ENCODE measurements at regions of chr3 and their contacts with region 1.

Region 1: DNA sequence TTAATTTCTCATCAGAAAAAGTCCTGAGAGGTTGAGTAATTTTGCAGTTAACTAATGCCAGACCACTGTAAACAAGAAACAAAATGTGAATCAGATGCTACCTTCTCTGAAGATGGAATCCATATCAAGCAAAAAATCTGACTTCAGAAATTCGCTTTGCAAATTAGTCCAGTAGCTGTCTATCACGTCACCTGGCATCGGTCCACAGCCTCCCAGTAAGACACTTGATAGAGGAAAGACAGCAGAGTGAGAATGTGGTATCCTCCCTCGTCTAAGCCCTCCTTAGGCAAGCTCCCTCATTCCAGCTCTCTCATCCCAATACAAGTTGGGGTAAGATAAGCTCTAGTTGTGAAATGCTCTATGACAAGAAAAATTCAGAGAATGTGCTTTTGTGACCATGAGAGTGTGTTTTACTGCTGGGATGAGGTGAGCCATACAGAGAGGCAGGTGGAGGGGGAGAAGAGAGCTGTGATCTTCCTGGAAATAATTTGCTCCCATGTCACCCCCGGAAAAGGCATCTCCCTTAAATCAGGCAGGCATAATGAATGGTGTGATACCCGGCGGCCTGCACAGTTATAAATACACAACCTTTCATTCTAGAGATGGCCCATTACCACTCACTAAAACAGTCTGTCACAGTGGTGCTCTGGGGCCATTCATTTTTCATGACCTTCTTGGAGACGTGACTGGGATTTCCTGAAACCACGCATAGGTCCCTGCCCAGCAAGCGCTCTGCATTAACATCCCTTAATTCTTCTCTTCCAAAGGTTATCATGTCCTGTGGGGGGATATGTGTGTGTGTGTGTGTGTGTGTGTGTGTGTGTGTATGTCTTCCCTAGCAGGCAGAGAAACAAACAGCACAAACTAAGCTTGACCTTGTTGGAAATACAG is 602.0 kb upstream of the KCNMB2 start:
- H3K4me3 Mint-ChIP-seq: no peak overlapping the region
- H3K27ac Mint-ChIP-seq: no peak overlapping the region
- H3K4me1 Mint-ChIP-seq: no peaks in the 10 kb centered on the region
- H3K27me3 Mint-ChIP-seq: peaks cover 11% of the 10 kb centered on the region

Region 2: DNA sequence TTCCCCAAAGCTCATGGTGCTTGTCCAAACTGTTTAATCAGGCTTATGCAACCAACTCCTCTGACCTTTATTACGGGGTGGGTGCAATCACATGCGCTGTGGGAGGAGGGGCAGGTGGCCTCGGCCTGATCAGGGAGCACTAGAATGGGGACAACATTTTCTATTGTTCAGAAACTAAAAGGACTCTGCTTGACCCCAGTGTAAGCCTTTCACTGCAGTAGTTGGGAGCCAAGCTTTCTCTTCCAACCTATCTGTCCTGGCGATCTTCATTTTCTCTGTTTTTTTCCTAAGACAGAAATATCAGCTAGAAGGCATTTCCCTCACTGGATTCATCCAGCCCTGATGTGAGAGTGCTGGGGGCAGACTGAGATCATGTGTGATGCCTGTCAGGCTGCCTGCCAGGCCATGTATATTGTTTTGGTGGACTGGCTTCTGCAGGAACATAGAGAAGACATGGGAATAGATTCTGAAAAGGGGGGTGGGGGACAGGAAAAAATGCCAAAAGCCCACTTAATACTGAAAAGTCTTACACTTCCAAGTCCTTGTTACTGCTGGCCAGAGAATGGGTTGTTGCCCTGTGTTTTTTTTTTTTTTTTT is 110.0 kb before region 1 on chr3:
- intact Hi-C with region 1: loop called (anchors 10 kb)
- H3K4me3 Mint-ChIP-seq: no peak overlapping the region
- H3K27ac Mint-ChIP-seq: no peak overlapping the region
- H3K4me1 Mint-ChIP-seq: peaks cover 46% of the 10 kb centered on the region
- H3K27me3 Mint-ChIP-seq: peaks cover 2% of the 10 kb centered on the region